ENCODE measurements at regions of chr3 and their contacts with region 1.

Region 1: GRCh38 chr3:76497636-76498035 is 542.3 kb upstream of the ROBO2 start:
- ATAC-seq: no peak
- H3K4me3 ChIP-seq: no peak overlapping the region
- H3K27ac ChIP-seq: no peak overlapping the region
- H3K4me1 ChIP-seq: no peaks in the 10 kb centered on the region

Region 2: GRCh38 chr3:76308541-76308940 is 189.1 kb before region 1 on chr3:
- in situ Hi-C with region 1: loop called in 1 of 9 experiments (anchors 25 kb)
- ATAC-seq: peak in 2 of 8 experiments; percentile 23 to 39
- H3K4me3 ChIP-seq: no peak overlapping the region
- H3K27ac ChIP-seq: no peak overlapping the region
- H3K4me1 ChIP-seq: no peaks in the 10 kb centered on the region

Region 3: DNA sequence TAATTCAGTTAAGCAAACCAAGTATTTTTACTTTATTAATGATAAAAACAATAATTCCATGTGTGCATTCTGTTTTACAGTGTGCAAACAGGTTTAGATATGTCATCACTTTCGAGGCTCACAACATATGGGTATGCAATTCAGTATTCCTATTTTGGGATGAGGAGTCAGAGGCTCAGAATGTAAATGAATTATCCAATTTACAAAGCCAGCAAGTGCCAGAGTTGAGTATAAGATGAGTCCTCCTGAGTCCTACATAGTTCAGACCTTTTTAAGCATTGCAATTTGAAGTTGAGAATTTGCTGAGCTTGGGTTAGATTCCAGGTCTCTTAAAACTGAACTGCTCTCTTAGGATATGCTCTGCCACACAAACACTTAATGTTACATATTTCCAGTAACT is 118.1 kb after region 1 on chr3:
- in situ Hi-C with region 1: no loop called
- ATAC-seq: peak in 3 of 8 experiments; percentile 63 to 95 (median 80)
- H3K4me3 ChIP-seq: no peak overlapping the region
- H3K27ac ChIP-seq: no peak overlapping the region
- H3K4me1 ChIP-seq: peaks cover 0 to 6% of the 10 kb centered on the region in 2 donors

Measured in motor neuron (in vitro differentiated cells).